ENCODE measurements at regions of chr3 and their contacts with region 1.

Region 1: DNA sequence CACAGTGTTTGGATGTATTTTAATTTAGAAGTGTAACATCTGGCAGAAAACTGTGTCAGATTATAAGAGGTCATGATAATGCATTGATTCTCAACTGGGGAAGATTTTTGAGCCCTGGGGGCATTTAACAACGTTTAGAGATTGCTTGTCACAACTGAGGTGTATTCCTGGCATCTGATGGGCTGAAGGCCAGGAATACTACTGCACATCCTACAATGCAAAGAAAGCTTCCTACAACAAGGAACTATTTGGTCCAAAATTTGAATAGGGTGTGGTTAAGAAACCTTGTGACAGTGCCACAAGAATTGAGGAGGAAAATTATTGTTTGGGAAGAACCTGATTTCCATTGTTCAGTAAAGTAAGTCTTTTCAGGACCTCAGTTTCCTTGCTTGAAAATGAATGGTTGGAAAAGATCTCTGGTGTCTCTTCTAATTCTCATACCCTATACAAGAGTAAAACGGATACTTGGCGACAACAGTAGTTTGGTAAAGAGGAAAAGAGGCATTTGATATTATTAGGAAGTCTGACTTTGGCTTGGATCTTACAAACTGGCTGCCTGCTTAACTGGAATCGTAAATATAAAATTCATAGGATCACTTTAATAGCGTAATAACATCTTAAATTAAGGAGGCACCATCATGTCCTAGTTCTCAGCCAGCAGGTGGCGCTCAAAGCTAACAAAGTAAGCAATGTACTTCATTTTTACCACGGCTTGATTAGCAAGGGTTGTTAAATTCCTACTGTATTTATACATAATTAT is 4.3 kb downstream of the DAZL start:
- DNase-seq: peak; percentile 62
- ATAC-seq: peak; percentile 63; the same call in 2 of the 3 replicates
- H3K4me3 ChIP-seq: no peak overlapping the region
- H3K27ac ChIP-seq: no peak overlapping the region
- H3K4me1 ChIP-seq: no peaks in the 10 kb centered on the region
- H3K27me3 ChIP-seq: no peaks in the 10 kb centered on the region
- CTCF ChIP-seq: peak; percentile 72
- EP300 ChIP-seq: no peak
- POLR2A ChIP-seq: no peak
- RAD21 ChIP-seq: peak; percentile 46; the same call in 1 of the 2 replicates

Region 2: DNA sequence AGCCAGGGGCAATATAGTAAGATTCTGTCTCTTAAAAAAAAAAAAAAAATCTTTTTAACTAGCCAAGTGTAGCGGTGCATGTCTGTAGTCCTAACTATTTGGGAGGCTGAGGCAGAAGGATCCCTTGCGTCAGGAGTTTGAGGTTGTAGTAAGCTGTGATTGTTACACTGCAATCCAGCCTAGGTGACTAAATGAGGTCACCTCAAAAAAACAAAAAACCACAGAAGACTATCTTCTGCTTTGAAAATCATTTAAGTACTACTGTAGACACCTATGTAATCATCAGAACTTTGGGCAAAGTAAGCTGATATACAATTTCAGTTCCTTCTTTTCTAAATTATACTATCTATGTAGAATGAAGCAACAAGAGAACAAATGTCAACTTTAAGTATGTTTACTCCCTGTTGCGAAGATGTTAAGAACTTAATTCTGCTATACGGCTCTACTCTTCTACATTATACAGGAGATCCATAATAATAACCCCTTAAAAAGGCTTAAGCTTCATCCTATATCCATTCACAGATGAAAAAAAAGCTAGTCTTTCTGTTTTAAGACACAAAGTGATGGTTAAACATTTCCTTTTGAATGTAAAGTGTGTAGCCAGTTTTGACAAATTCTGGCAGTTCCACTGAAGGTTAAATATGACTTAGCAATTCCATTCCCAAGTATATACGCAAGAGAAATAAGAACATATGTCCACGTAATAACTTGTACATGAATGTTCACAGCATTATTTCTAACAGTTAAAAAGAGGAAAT is 10.9 kb before region 1 on chr3:
- CTCF ChIA-PET with region 1: no interaction called
- POLR2A ChIA-PET with region 1: no interaction called
- in situ Hi-C with region 1: no loop called
- intact Hi-C with region 1: no loop called
- DNase-seq: no peak
- ATAC-seq: no peak
- H3K4me3 ChIP-seq: no peak overlapping the region
- H3K27ac ChIP-seq: no peak overlapping the region
- H3K4me1 ChIP-seq: no peaks in the 10 kb centered on the region
- H3K27me3 ChIP-seq: no peaks in the 10 kb centered on the region
- CTCF ChIP-seq: no peak
- EP300 ChIP-seq: no peak
- POLR2A ChIP-seq: no peak
- RAD21 ChIP-seq: no peak

Region 3: DNA sequence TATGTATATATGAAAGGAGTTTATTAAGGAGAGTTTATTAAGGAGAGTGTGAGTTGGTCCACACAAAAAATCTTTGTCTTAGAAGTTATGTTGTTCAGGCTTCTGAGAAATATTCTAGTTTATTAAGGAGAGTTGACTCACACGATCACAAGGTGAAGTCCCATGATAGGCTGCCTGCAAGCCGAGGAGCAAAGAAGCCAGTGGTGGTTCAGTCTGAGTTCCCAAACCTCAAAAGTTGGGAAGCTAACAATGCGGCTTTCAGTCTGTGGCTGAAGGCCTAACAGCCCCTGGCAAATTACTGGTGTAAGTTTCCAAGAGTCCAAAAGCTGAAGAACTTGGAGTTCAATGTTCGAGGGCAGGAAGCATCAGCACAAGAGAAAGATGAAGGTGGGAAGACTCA is 46.7 kb after region 1 on chr3:
- CTCF ChIA-PET with region 1: no interaction called
- POLR2A ChIA-PET with region 1: no interaction called
- in situ Hi-C with region 1: no loop called
- intact Hi-C with region 1: no loop called
- DNase-seq: no peak
- ATAC-seq: no peak
- H3K4me3 ChIP-seq: no peak overlapping the region
- H3K27ac ChIP-seq: no peak overlapping the region
- H3K4me1 ChIP-seq: no peaks in the 10 kb centered on the region
- H3K27me3 ChIP-seq: peaks cover 0 to 5% of the 10 kb centered on the region in 2 experiments; a peak in 3 of 5 replicates
- CTCF ChIP-seq: no peak
- EP300 ChIP-seq: no peak
- POLR2A ChIP-seq: no peak
- RAD21 ChIP-seq: no peak

Region 4: GRCh38 chr3:16978234-16978920 is 377.4 kb after region 1 on chr3:
- CTCF ChIA-PET with region 1: no interaction called
- POLR2A ChIA-PET with region 1: no interaction called
- in situ Hi-C with region 1: no loop called
- intact Hi-C with region 1: no loop called
- DNase-seq: no peak
- ATAC-seq: no peak
- H3K4me3 ChIP-seq: no peak overlapping the region
- H3K27ac ChIP-seq: no peak overlapping the region
- H3K4me1 ChIP-seq: no peaks in the 10 kb centered on the region
- H3K27me3 ChIP-seq: no peaks in the 10 kb centered on the region
- CTCF ChIP-seq: no peak
- EP300 ChIP-seq: no peak
- POLR2A ChIP-seq: no peak
- RAD21 ChIP-seq: no peak

Region 5: GRCh38 chr3:17032407-17033034 is 431.6 kb after region 1 on chr3:
- CTCF ChIA-PET with region 1: no interaction called
- POLR2A ChIA-PET with region 1: no interaction called
- in situ Hi-C with region 1: loop called (anchors 25 kb)
- intact Hi-C with region 1: loop called (anchors 1 kb)
- DNase-seq: peak; percentile 16
- ATAC-seq: peak; percentile 91
- H3K4me3 ChIP-seq: no peak overlapping the region
- H3K27ac ChIP-seq: no peak overlapping the region
- H3K4me1 ChIP-seq: no peaks in the 10 kb centered on the region
- H3K27me3 ChIP-seq: peaks cover 1 to 3% of the 10 kb centered on the region in 2 experiments; a peak in 2 of 5 replicates
- CTCF ChIP-seq: peak; percentile 49
- EP300 ChIP-seq: no peak
- POLR2A ChIP-seq: no peak
- RAD21 ChIP-seq: no peak

Region 6: GRCh38 chr3:17233398-17233800 is 632.4 kb after region 1 on chr3:
- CTCF ChIA-PET with region 1: interaction called, 24 read pairs
- POLR2A ChIA-PET with region 1: no interaction called
- in situ Hi-C with region 1: loop called (anchors 5 kb)
- intact Hi-C with region 1: loop called (anchors 1 kb)
- DNase-seq: peak; percentile 66
- ATAC-seq: peak; percentile 93
- H3K4me3 ChIP-seq: no peak overlapping the region
- H3K27ac ChIP-seq: no peak overlapping the region
- H3K4me1 ChIP-seq: peaks cover 26% of the 10 kb centered on the region
- H3K27me3 ChIP-seq: no peaks in the 10 kb centered on the region
- CTCF ChIP-seq: peak; percentile 80
- EP300 ChIP-seq: no peak
- POLR2A ChIP-seq: no peak
- RAD21 ChIP-seq: peak; percentile 62

Region 7: DNA sequence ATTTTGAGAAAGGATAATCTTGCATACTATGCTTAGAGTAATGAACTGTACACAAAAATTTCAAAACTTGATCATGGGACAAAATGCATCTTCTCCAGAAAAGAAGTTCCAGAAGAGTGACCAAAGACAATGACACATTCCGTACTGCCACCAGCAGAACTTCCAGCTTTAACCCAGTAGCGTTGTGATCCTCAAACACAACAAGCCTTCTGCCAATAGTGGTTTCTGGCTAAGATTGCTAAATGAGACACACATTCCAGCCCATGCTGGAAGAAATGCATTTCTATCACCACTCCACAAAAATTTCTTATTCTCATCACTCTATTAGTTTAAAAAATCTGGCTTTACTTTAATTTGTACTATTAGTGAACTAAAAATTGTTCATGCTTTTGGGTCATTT is 806.6 kb after region 1 on chr3:
- CTCF ChIA-PET with region 1: interaction called, 7 read pairs
- POLR2A ChIA-PET with region 1: no interaction called
- in situ Hi-C with region 1: loop called (anchors 10 kb)
- intact Hi-C with region 1: no loop called
- DNase-seq: no peak
- ATAC-seq: no peak
- H3K4me3 ChIP-seq: no peak overlapping the region
- H3K27ac ChIP-seq: no peak overlapping the region
- H3K4me1 ChIP-seq: peaks cover 5% of the 10 kb centered on the region; the same call in 1 of the 2 replicates
- H3K27me3 ChIP-seq: no peaks in the 10 kb centered on the region
- CTCF ChIP-seq: no peak
- EP300 ChIP-seq: no peak
- POLR2A ChIP-seq: no peak
- RAD21 ChIP-seq: no peak

Region 8: GRCh38 chr3:17412950-17413530 is 812.1 kb after region 1 on chr3:
- CTCF ChIA-PET with region 1: interaction called, 7 read pairs
- POLR2A ChIA-PET with region 1: no interaction called
- in situ Hi-C with region 1: loop called (anchors 10 kb)
- intact Hi-C with region 1: loop called (anchors 1 kb)
- DNase-seq: peak; percentile 64
- ATAC-seq: peak; percentile 82
- H3K4me3 ChIP-seq: no peak overlapping the region
- H3K27ac ChIP-seq: no peak overlapping the region
- H3K4me1 ChIP-seq: no peaks in the 10 kb centered on the region
- H3K27me3 ChIP-seq: no peaks in the 10 kb centered on the region
- CTCF ChIP-seq: peak; percentile 84
- EP300 ChIP-seq: no peak
- POLR2A ChIP-seq: no peak
- RAD21 ChIP-seq: peak; percentile 62

Region 9: DNA sequence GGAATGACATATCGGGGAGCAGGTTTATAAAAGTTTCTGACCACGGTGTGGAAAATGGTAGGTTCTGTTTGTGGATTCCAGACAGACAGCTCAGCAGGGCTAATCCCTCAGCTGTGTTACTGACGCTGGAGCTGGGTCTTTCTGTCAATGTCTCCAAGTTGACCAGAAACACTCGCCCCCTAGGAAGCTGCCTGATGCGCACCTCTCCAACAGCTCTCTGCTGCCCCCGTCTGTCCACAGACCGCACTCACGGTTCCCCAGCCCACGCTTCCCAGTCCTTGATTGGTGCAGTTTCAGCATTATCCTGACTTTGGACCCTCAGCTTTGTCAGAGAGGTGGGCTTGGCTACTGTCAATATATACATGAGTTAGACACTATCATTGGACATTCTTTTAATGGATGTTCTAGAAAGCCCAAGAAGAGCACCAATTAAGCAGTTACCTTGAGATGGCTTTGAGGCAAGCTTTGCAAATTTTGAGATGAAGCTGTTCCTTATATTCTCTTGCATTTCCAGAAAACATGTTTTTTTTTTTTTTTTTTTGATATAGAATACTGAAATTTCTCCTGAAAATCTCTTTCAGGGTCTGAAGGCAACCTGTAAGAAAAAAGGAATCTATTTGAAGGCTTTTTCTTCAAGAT is 1240.3 kb after region 1 on chr3:
- CTCF ChIA-PET with region 1: interaction called, 5 read pairs
- POLR2A ChIA-PET with region 1: no interaction called
- in situ Hi-C with region 1: loop called (anchors 25 kb)
- intact Hi-C with region 1: loop called (anchors 5 kb)
- DNase-seq: peak; percentile 57
- ATAC-seq: peak; percentile 99
- H3K4me3 ChIP-seq: no peak overlapping the region
- H3K27ac ChIP-seq: no peak overlapping the region
- H3K4me1 ChIP-seq: no peaks in the 10 kb centered on the region
- H3K27me3 ChIP-seq: no peaks in the 10 kb centered on the region
- CTCF ChIP-seq: peak; percentile 96
- EP300 ChIP-seq: no peak
- POLR2A ChIP-seq: no peak
- RAD21 ChIP-seq: peak; percentile 90